ENCODE measurements at regions of chr3 and their contacts with region 1.

Region 1: GRCh38 chr3:132535575-132536441 is 61.3 kb upstream of the ACKR4 start:
- DNase-seq: no peak
- ATAC-seq: peak; percentile 82

Region 2: GRCh38 chr3:132641837-132642538 is 106.2 kb after region 1 on chr3:
- intact Hi-C with region 1: loop called (anchors 1 kb)
- DNase-seq: no peak
- ATAC-seq: peak; percentile 52

Measured in Right ventricle myocardium inferior (tissue), 1 donor.